Activated CD4-positive, alpha-beta T cell treated with anti-CD3 and anti-CD28 coated beads, Interleukin-2, amount 10 ng/mL, durations not matched to agents 24 days and 14 days (primary cell): ENCODE measurements at regions of chr2 and their contacts with region 1.

Region 1: GRCh38 chr2:11465497-11466406 is at the start of gene E2F6:
- DNase-seq: peak; percentile 96
- H3K4me3 Mint-ChIP-seq: peak within 1 kb of the TSS; percentile 96
- H3K27ac Mint-ChIP-seq: peak within 1 kb of the TSS; percentile 94
- H3K4me1 Mint-ChIP-seq: peaks cover 30% of the 10 kb centered on the region
- H3K27me3 Mint-ChIP-seq: peaks cover 2% of the 10 kb centered on the region
- total RNA-seq, gene E2F6: 20.3 and 22.9 TPM in 2 replicates

Region 2: DNA sequence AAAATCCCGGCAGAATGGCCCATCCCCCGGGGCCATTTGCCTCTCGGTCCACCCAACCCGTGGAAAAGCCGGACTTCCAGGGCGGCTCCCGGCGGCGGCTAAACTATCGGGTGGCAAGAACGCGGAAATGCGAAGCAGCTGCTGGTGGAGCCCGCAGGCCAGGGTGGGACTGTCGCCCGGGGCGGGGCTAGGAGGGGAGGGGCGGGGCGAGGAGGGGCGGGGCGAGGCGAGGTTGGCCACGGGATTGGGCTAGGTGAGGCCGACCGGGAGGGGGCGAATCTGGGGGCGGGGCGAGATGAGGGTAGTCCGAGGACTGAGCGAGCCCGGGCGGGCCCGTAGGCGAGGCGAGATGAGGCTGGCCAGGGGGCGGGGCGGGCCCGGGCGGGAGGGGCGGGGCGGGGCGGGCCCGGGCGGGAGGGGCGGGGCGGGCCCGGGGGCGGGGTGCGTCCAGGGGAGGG is 310.8 kb before region 1 on chr2:
- intact Hi-C with region 1: loop called (anchors 1 kb)
- DNase-seq: peak; percentile 98
- H3K4me3 Mint-ChIP-seq: peak overlapping the region; percentile 86
- H3K27ac Mint-ChIP-seq: peak overlapping the region; percentile 88
- H3K4me1 Mint-ChIP-seq: peaks cover 8% of the 10 kb centered on the region
- H3K27me3 Mint-ChIP-seq: peaks cover 8% of the 10 kb centered on the region

Region 3: DNA sequence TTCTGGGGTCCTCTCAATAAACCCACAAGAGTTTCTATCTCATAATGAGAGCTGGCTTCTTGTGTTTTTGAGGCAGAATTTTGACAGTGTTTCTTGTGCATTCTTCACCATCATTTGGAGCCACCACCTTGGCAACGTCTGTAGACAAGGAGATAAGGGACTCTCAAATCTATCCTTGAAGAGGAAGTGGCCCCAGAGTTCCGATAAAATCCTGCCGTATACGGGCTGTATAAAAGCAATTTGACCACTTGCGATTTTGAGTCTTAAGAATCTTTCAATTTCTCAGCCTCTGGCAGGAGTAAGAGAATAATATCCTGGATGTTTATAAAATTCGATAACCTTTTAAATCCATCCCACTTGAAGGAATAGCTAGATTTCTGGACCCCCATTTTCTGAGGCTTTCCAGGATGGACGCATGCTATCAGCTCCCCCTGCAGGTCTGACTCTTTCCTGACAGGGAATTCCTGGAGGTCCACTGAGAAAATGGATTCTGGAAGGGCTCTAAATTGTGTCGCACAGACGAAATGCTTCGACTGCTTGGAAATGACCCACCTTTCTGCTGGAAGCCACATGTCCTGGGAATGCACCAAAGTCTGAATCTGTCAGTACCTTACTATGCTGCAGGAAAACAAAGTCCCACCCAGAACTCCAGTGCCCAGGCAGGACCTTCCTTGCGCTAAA is 53.8 kb before region 1 on chr2:
- intact Hi-C with region 1: no loop called
- DNase-seq: no peak
- H3K4me3 Mint-ChIP-seq: no peak overlapping the region
- H3K27ac Mint-ChIP-seq: no peak overlapping the region
- H3K4me1 Mint-ChIP-seq: no peaks in the 10 kb centered on the region
- H3K27me3 Mint-ChIP-seq: peaks cover 6% of the 10 kb centered on the region

Region 4: DNA sequence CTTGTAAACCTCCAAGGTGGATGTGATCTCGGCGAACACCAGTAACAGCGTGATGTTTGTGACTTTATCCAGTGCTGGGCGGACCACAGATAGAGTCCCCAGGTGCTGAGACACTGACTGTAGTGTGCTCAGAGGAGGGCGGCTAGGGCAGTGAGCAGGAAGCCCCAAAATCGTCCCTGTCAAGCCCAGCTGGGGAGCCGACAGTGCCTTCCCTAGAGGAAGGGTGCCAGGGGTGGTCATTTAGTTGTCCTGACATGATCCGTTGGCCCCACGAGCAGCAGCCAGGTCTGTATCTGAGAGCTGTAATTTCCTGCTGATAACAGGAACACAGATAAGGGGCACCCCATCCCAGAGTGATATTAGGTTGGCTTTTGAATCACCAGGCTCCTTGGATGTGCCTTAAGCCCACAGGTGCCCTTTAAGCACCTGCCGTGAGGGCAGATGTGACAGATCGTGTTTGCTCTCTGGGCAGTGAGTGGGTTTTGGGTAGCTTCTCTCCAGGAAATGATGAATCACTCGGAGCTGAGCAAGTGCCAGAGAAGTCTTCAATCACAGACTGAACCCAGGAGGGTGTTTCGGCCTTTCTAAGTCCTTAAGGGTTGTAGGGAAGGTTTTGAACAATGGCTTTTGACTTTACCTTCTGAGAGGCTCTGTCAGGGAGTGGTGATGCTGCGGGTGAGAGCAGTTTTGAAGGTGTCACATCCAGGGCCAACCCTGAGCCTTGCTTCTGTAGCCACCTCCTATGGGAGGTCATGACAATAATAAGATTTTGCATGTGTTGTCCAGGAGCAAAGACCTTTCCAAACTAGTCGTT is 288.3 kb after region 1 on chr2:
- intact Hi-C with region 1: loop called (anchors 5 kb)
- DNase-seq: peak; percentile 87
- H3K4me3 Mint-ChIP-seq: peak overlapping the region; percentile 80
- H3K27ac Mint-ChIP-seq: peak overlapping the region; percentile 89
- H3K4me1 Mint-ChIP-seq: peaks cover 71% of the 10 kb centered on the region
- H3K27me3 Mint-ChIP-seq: no peaks in the 10 kb centered on the region